Endothelial cell of umbilical vein (primary cell): ENCODE measurements at regions of chr12 and their contacts with region 1.

Region 1: GRCh38 chr12:86172913-86173443 is 83.2 kb downstream of the MGAT4C start:
- DNase-seq: no peak
- H3K4me3 ChIP-seq: no peak overlapping the region
- H3K27ac ChIP-seq: no peak overlapping the region
- H3K4me1 ChIP-seq: no peaks in the 10 kb centered on the region
- H3K27me3 ChIP-seq: no peaks in the 10 kb centered on the region
- CTCF ChIP-seq: no peak
- POLR2A ChIP-seq: no peak

Region 2: DNA sequence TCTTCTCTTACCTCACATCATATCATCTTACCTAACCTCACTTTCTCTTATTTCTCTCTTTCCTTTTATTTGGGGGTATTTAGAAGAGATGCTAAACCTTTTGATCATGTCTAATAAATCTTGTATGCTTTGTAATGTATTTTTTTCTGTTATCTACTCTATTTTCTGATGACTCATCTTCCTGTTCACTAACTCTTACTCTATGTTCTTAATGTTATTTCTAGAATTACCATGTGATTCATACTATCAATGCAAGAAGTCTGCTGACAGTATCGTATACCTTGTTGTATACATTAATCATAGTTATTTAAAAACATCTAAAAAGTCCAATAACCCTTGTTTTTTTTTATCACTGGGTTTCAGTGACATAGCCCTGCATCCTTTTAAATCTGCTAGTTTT is 21.0 kb after region 1 on chr12:
- CTCF ChIA-PET with region 1: interaction called, 4 read pairs
- POLR2A ChIA-PET with region 1: no interaction called
- dilution Hi-C with region 1: no loop called
- intact Hi-C with region 1: loop called (anchors 2 kb)
- DNase-seq: peak; percentile 59
- H3K4me3 ChIP-seq: no peak overlapping the region
- H3K27ac ChIP-seq: no peak overlapping the region
- H3K4me1 ChIP-seq: peaks cover 10% of the 10 kb centered on the region
- H3K27me3 ChIP-seq: no peaks in the 10 kb centered on the region
- CTCF ChIP-seq: no peak
- POLR2A ChIP-seq: no peak

Region 3: DNA sequence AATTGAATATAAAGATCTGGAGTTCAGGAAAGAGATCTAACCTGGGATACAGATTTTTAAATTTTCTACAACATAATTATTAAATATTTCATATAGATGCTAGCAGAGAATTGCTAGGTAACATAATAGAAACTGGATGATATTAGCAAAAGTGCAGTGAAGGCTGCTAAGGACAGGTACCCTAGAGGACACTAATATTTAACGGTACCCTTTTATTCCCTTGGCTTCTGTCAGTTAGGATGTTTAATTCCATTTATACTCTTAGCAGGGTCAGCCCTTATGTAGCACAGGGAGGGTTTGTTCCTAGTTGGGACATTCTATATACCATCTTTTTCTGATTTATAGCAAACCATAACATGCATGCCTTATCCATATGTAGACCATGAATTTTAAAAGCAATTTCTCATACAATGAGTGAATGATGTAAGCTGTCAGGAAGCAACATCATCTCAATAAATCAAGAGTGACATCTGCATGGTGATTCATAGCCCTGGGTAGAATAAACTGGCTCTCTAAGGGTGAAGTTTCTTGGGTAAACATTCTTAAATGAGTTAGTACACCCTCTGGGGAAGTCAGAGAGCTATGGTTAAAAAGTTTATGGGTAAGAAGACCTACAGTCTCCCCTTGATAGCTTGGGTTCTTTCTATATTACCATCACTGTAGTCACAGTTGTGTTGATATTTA is 487.7 kb after region 1 on chr12:
- CTCF ChIA-PET with region 1: no interaction called
- POLR2A ChIA-PET with region 1: no interaction called
- dilution Hi-C with region 1: no loop called
- intact Hi-C with region 1: no loop called
- DNase-seq: peak; percentile 85
- H3K4me3 ChIP-seq: no peak overlapping the region
- H3K27ac ChIP-seq: no peak overlapping the region
- H3K4me1 ChIP-seq: peaks cover 5% of the 10 kb centered on the region
- H3K27me3 ChIP-seq: no peaks in the 10 kb centered on the region
- CTCF ChIP-seq: no peak
- POLR2A ChIP-seq: no peak